Adrenal gland (tissue), 19 donors: ENCODE measurements at regions of chr4 and their contacts with region 1.

Region 1: GRCh38 chr4:13654158-13654797 is 26.8 kb upstream of the BOD1L1 start:
- DNase-seq: peak; percentile 67 to 91 (median 82)
- H3K4me3 ChIP-seq: peak overlapping the region in 1 of 4 donors; percentile 47
- H3K27ac ChIP-seq: no peak overlapping the region
- H3K4me1 ChIP-seq: peaks cover 0 to 15% of the 10 kb centered on the region in 2 donors
- H3K27me3 ChIP-seq: no peaks in the 10 kb centered on the region
- CTCF ChIP-seq: peak; percentile 62 to 89 (median 78)
- POLR2A ChIP-seq: no peak

Region 2: GRCh38 chr4:15001869-15002658 is 1347.8 kb after region 1 on chr4 and contains the start of gene CPEB2:
- intact Hi-C with region 1: loop called in 1 of 2 experiments (anchors 10 kb)
- DNase-seq: peak; percentile 94 to 97 (median 96)
- H3K4me3 ChIP-seq: peak within 1 kb of the TSS; percentile 71 to 93 (median 88)
- H3K27ac ChIP-seq: peak within 1 kb of the TSS; percentile 91 to 100 (median 100)
- H3K4me1 ChIP-seq: peaks cover 14 to 24% of the 10 kb centered on the region in 2 donors
- H3K27me3 ChIP-seq: no peaks in the 10 kb centered on the region
- CTCF ChIP-seq: peak in 2 of 6 experiments; percentile 7 to 9
- POLR2A ChIP-seq: peak; percentile 97 to 99
- total RNA-seq, gene CPEB2: 6.2 to 15.8 (median 10.8) TPM

Region 3: GRCh38 chr4:15162465-15163283 is 1508.4 kb after region 1 on chr4:
- intact Hi-C with region 1: loop called in 1 of 2 experiments (anchors 10 kb)
- DNase-seq: peak in 1 of 7 donors; percentile 28
- H3K4me3 ChIP-seq: no peak overlapping the region
- H3K27ac ChIP-seq: no peak overlapping the region
- H3K4me1 ChIP-seq: no peaks in the 10 kb centered on the region
- H3K27me3 ChIP-seq: no peaks in the 10 kb centered on the region
- CTCF ChIP-seq: peak; percentile 30 to 67 (median 56)
- POLR2A ChIP-seq: no peak